ENCODE measurements at regions of chr7 and their contacts with region 1.

Region 1: GRCh38 chr7:34133983-34134782 is 228.8 kb downstream of the BMPER start:
- DNase-seq: peak; percentile 89
- ATAC-seq: peak; percentile 92
- H3K4me3 Mint-ChIP-seq: no peak overlapping the region
- H3K27ac Mint-ChIP-seq: 0 out of 2 replicates have a peak overlapping the region, but pooled peaks have one; percentile 13
- H3K4me1 Mint-ChIP-seq: peaks cover 12% of the 10 kb centered on the region
- H3K27me3 Mint-ChIP-seq: no peaks in the 10 kb centered on the region
- CTCF ChIP-seq: peak; percentile 67

Region 2: GRCh38 chr7:34158368-34159155 is 24.4 kb after region 1 on chr7:
- CTCF ChIA-PET with region 1: interaction called, 16 read pairs
- POLR2A ChIA-PET with region 1: no interaction called
- DNase-seq: peak; percentile 50
- ATAC-seq: peak; percentile 99
- H3K4me3 Mint-ChIP-seq: no peak overlapping the region
- H3K27ac Mint-ChIP-seq: no peak overlapping the region
- H3K4me1 Mint-ChIP-seq: peaks cover 4% of the 10 kb centered on the region; the same call in 1 of the 2 replicates
- H3K27me3 Mint-ChIP-seq: no peaks in the 10 kb centered on the region
- CTCF ChIP-seq: no peak

Measured in WTC11 (cell line).